Mammary epithelial cell (primary cell): ENCODE measurements at regions of chr17 and their contacts with region 1.

Region 1: DNA sequence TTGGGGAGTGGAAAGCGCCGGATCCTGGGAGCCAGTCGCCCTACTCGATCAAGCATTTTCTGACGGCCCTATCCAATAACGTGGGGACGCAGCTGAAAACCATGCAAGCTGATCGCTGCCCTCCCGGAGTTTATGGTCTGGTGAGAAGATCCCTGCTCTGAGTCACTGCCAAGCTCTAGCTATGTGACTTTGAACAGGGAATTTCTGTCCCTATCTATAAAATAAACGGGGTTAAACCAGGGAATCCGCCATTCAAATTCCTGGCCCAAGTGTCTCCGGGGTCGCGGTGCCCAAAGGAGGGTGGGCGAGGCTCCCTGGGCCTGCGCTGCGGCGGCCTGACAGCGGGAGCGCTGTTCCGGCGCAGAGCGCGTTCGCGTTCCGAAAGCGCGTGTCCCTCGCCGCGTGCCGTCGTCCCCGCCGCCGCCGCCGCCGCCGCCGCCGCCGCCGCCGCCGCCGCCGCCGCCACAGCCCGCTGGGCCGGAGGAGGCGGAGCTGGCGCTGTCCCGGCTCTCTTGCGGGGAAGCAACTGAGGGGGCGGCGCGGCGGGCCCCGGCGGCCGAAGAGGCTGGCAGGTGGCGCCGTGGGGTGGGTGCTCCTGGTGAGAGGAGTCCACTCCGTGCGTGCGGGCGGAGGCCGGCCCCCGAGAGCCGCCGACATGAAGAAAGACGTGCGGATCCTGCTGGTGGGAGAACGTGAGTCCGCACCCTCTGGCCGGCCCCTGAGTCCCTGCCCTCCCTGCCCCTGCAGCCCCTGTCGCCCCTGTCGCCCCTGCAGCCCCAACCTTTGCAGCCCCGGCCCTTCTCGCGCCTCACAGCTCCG is at the start of gene RHOT1:
- DNase-seq: peak; percentile 86
- H3K4me3 ChIP-seq: peak within 1 kb of the TSS; percentile 75 to 100 (median 100)
- H3K27ac ChIP-seq: peak within 1 kb of the TSS; percentile 70
- H3K4me1 ChIP-seq: peaks cover 13% of the 10 kb centered on the region
- H3K27me3 ChIP-seq: no peaks in the 10 kb centered on the region
- CTCF ChIP-seq: peak; percentile 13 to 63
- total RNA-seq, gene RHOT1: 20.3 to 28.3 TPM

Region 2: GRCh38 chr17:32127158-32127897 is 14.9 kb before region 1 on chr17:
- CTCF ChIA-PET with region 1: interaction called, 20 read pairs
- dilution Hi-C with region 1: no loop called
- in situ Hi-C with region 1: no loop called
- intact Hi-C with region 1: no loop called
- DNase-seq: peak; percentile 86
- H3K4me3 ChIP-seq: peak overlapping the region; percentile 63 to 96 (median 79)
- H3K27ac ChIP-seq: peak overlapping the region; percentile 82
- H3K4me1 ChIP-seq: peaks cover 3% of the 10 kb centered on the region
- H3K27me3 ChIP-seq: no peaks in the 10 kb centered on the region
- CTCF ChIP-seq: no peak

Region 3: GRCh38 chr17:32161506-32162365 is 19.5 kb after region 1 on chr17:
- CTCF ChIA-PET with region 1: no interaction called
- dilution Hi-C with region 1: no loop called
- in situ Hi-C with region 1: no loop called
- intact Hi-C with region 1: loop called (anchors 2 kb)
- DNase-seq: peak; percentile 83
- H3K4me3 ChIP-seq: no peak overlapping the region
- H3K27ac ChIP-seq: no peak overlapping the region
- H3K4me1 ChIP-seq: peaks cover 12% of the 10 kb centered on the region
- H3K27me3 ChIP-seq: no peaks in the 10 kb centered on the region
- CTCF ChIP-seq: no peak